CD8-positive, alpha-beta T cell (primary cell): ENCODE measurements at regions of chr19 and their contacts with region 1.

Region 1: DNA sequence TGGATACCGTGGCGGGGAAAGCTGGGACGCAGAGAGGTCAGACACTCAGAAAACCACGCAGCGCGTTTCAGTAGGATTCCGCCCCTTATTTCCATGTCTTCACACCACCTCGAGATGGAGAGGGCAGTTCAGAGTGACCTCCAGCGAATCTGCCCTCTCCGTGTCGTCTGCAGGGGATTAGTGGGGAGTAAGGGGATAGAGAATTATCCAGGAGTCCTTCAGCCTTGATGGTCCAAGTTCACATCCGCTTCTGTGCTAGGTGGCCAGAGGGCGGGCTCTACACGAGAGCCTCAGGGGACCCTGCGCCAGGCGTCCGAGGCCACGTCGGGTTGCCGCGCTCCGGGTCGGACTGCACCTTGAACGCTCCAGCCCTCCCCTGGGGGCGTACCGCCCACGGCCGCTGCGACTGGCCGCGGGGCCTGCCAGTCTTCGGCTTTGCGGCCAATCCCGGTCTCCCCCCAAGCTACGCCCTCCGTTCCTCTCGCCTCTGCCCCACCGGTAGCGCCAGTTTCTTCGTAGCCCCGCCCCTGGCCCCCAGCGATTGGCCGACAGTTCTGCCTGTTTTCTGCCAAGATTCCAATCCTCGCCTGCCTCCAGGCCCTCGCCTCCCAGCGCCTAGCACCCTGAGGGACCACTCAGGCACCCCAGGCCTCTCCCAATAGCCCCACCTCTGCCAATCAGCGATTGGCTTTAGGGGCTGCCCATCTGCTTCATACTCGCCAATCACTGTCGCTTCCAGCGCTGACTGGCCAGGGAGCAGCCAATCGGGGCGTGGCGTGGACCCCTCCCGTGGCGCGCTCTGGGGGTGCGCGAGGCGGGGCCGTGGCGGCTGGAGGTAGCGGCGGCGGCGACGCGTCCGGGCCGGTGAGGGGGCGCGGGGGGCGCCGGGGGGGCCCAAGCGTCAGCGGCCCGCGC is at the start of gene SLC25A42:
- DNase-seq: peak; percentile 97 to 100 (median 99)
- ATAC-seq: peak; percentile 90
- H3K4me3 ChIP-seq: peak within 1 kb of the TSS; percentile 61 to 87
- H3K4me3 Mint-ChIP-seq: peak within 1 kb of the TSS; percentile 89
- H3K27ac ChIP-seq: peak within 1 kb of the TSS; percentile 47 to 77
- H3K27ac Mint-ChIP-seq: peak within 1 kb of the TSS; percentile 88
- H3K4me1 ChIP-seq: peaks cover 23% of the 10 kb centered on the region
- H3K4me1 Mint-ChIP-seq: peaks cover 32% of the 10 kb centered on the region
- H3K27me3 ChIP-seq: no peaks in the 10 kb centered on the region
- H3K27me3 Mint-ChIP-seq: no peaks in the 10 kb centered on the region
- CTCF ChIP-seq: no peak
- total RNA-seq, gene SLC25A42: 8.3 to 10.6 TPM

Region 2: DNA sequence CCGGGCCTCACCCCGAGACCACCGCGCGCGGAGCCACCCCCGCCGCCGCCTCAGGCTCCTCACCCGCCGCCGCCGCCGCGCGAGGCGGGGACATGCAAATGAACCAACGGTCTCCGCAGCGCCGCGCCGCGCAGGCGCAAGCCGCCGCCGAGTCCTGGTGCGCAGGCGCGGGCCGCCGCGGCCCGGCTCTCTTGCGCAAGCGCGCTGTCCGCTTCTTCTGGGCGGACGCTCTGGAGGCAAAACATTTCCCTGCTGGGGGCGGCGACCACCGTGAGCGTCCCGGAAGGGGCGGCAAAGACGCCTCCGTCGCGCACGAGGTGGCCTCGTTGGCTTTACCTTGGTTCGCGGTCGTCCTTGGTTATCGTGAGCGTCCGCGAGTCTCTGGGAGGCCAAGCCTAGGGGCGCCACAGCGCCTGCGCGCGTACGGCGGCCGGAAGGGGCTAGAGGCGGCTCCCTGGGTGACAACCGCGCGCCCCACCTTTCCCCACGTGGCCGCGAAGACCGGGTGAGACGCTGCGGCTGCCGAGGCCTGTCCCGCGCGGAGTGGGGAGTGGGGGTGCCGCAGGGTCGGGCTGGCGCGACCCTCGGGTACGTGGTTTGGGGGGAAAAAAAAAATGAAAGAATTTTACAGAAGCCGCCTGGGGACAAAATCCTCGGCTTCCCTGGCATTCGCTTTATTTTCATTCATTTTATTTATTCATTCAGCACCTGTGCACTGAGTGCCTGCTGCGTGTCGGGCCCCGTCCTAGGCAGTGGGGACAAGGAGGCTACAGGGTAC is 29.8 kb before region 1 on chr19 and contains the starts of genes ARMC6 and SUGP2:
- CTCF ChIA-PET with region 1: no interaction called
- POLR2A ChIA-PET with region 1: no interaction called
- intact Hi-C with region 1: loop called (anchors 1 kb)
- DNase-seq: peak; percentile 79 to 95 (median 89)
- ATAC-seq: peak; percentile 68
- H3K4me3 ChIP-seq: peak within 1 kb of the TSS; percentile 71 to 81
- H3K4me3 Mint-ChIP-seq: peak within 1 kb of the TSS; percentile 97
- H3K27ac ChIP-seq: peak within 1 kb of the TSS; percentile 65 to 85
- H3K27ac Mint-ChIP-seq: peak within 1 kb of the TSS; percentile 97
- H3K4me1 ChIP-seq: peaks cover 18% of the 10 kb centered on the region
- H3K4me1 Mint-ChIP-seq: peaks cover 33% of the 10 kb centered on the region
- H3K27me3 ChIP-seq: no peaks in the 10 kb centered on the region
- H3K27me3 Mint-ChIP-seq: no peaks in the 10 kb centered on the region
- CTCF ChIP-seq: no peak
- total RNA-seq, gene ARMC6: 4.6 to 5.3 TPM
- total RNA-seq, gene SUGP2: 85.4 to 90.8 TPM

Region 3: DNA sequence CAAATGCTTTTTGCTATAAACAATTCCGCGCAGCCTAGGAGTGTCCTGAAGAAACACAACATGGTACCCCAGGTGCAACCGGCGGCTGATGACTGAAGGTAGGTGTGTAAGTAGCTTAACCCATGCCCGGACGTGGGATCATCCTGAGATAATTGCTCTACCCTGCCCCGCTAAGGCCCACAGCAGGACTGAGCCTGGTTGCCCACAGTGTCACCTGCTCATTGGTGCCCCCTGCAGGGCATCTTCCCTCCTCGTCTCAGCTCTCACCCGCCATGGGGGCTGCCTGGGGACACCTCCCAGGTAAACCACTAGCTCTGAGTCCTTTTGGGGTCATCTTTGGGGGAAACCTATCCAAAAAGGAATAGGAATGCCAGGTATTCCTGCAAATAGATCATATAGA is 52.5 kb after region 1 on chr19:
- CTCF ChIA-PET with region 1: interaction called, 3 read pairs
- POLR2A ChIA-PET with region 1: no interaction called
- intact Hi-C with region 1: loop called in 1 of 2 experiments (anchors 5 kb)
- DNase-seq: peak; percentile 16 to 66 (median 52)
- ATAC-seq: peak; percentile 42
- H3K4me3 ChIP-seq: no peak overlapping the region
- H3K4me3 Mint-ChIP-seq: no peak overlapping the region
- H3K27ac ChIP-seq: no peak overlapping the region
- H3K27ac Mint-ChIP-seq: no peak overlapping the region
- H3K4me1 ChIP-seq: no peaks in the 10 kb centered on the region
- H3K4me1 Mint-ChIP-seq: no peaks in the 10 kb centered on the region
- H3K27me3 ChIP-seq: no peaks in the 10 kb centered on the region
- H3K27me3 Mint-ChIP-seq: no peaks in the 10 kb centered on the region
- CTCF ChIP-seq: peak; percentile 17